Transverse colon (tissue), 4 donors: ENCODE measurements at regions of chr7 and their contacts with region 1.

Region 1: GRCh38 chr7:156827587-156828203 is 65.3 kb downstream of the LMBR1 start:
- DNase-seq: no peak
- H3K4me3 ChIP-seq: no peak overlapping the region
- H3K27ac ChIP-seq: no peak overlapping the region
- H3K4me1 ChIP-seq: no peaks in the 10 kb centered on the region
- H3K27me3 ChIP-seq: no peaks in the 10 kb centered on the region
- CTCF ChIP-seq: peak; percentile 25 to 37 (median 33)
- EP300 ChIP-seq: no peak
- POLR2A ChIP-seq: no peak

Region 2: GRCh38 chr7:155439311-155440017 is 1388.2 kb before region 1 on chr7:
- in situ Hi-C with region 1: no loop called
- intact Hi-C with region 1: loop called (anchors 5 kb)
- DNase-seq: no peak
- H3K4me3 ChIP-seq: no peak overlapping the region
- H3K27ac ChIP-seq: no peak overlapping the region
- H3K4me1 ChIP-seq: no peaks in the 10 kb centered on the region
- H3K27me3 ChIP-seq: peaks cover 54% of the 10 kb centered on the region
- CTCF ChIP-seq: no peak
- EP300 ChIP-seq: no peak
- POLR2A ChIP-seq: no peak

Region 3: DNA sequence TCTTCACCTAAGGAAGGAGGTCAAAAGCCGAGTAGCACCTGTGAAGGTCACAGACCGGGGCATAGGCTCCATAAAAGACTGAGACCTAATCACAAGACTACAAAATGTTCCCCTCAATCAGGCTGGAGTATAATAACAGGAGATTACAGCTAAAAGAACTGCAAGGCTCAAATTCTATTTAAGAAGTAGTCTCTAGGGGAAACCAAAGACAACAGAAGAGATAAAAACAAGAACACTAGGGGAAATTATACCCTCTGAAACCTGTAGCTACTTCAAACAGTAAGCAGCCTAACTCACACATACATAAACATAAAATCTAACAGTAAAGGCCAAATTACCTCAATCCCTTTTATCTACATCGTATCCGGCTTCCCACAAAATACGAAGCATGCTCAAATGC is 27.0 kb after region 1 on chr7:
- in situ Hi-C with region 1: no loop called
- intact Hi-C with region 1: no loop called
- DNase-seq: no peak
- H3K4me3 ChIP-seq: no peak overlapping the region
- H3K27ac ChIP-seq: no peak overlapping the region
- H3K4me1 ChIP-seq: no peaks in the 10 kb centered on the region
- H3K27me3 ChIP-seq: no peaks in the 10 kb centered on the region
- CTCF ChIP-seq: no peak
- EP300 ChIP-seq: no peak
- POLR2A ChIP-seq: no peak